A549 (cell line): ENCODE measurements at regions of chr2 and their contacts with region 1.

Region 1: DNA sequence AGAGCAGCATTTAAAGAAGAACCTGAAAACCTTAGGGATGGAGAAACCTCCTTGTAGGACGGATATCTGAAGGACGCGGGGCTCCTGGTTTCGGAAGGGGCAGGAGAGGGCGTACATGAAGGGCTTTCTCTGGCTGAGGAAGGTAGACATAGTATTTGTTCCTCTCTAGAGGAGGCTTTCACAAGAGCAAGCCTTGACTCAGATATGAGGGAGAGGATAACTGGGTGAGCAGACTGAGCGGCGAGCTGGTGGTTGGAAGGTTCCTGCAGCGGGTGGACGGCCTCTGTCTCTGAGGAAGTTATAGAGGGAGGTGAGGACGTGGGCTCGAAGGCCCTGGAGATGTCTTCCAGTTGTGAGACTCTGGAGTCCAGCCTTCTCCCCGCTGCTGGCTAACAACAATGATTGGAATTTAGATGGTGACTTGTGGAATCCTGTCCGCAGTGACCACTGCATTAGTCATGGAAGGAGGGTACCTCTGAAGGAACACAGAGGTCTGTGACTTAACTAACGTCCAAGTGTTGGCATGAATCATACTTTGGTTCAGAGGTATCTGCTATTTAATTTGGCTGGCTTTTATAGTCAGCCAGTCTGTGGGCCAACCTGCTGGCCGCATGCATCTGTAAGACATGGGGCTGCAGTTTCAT is 80.9 kb downstream of the ASAP2 start:
- DNase-seq: peak; percentile 94 to 99
- ATAC-seq: peak; percentile 94 to 95
- H3K4me3 ChIP-seq: no peak overlapping the region; the same call in 1 of the 3 replicates
- H3K27ac ChIP-seq: peak overlapping the region; percentile 86 to 87
- H3K4me1 ChIP-seq: peaks cover 58% of the 10 kb centered on the region
- CTCF ChIP-seq: peak; percentile 21; the same call in 1 of the 3 replicates
- EP300 ChIP-seq: peak; percentile 52 to 61; a peak in 2 of 5 replicates
- POLR2A ChIP-seq: no peak
- RAD21 ChIP-seq: peak in 1 of 2 experiments; percentile 41; a peak in 4 of 5 replicates

Region 2: GRCh38 chr2:9057939-9058761 is 229.4 kb before region 1 on chr2:
- CTCF ChIA-PET with region 1: no interaction called
- POLR2A ChIA-PET with region 1: no interaction called
- DNase-seq: peak in 1 of 2 experiments; percentile 66
- ATAC-seq: no peak
- H3K4me3 ChIP-seq: no peak overlapping the region
- H3K27ac ChIP-seq: peak overlapping the region in 1 of 2 experiments; percentile 19; a peak in 1 of 6 replicates
- H3K4me1 ChIP-seq: peaks cover 8% of the 10 kb centered on the region; the same call in 1 of the 3 replicates
- CTCF ChIP-seq: no peak
- EP300 ChIP-seq: no peak
- POLR2A ChIP-seq: no peak
- RAD21 ChIP-seq: no peak

Region 3: GRCh38 chr2:9303528-9304225 is 16.2 kb after region 1 on chr2:
- CTCF ChIA-PET with region 1: interaction called, 10 read pairs
- POLR2A ChIA-PET with region 1: no interaction called
- DNase-seq: no peak
- ATAC-seq: no peak
- H3K4me3 ChIP-seq: no peak overlapping the region
- H3K27ac ChIP-seq: no peak overlapping the region
- H3K4me1 ChIP-seq: peaks cover 14% of the 10 kb centered on the region
- CTCF ChIP-seq: no peak
- EP300 ChIP-seq: no peak
- POLR2A ChIP-seq: no peak
- RAD21 ChIP-seq: no peak